Caco-2 (cell line): ENCODE measurements at regions of chr10 and their contacts with region 1.

Region 1: DNA sequence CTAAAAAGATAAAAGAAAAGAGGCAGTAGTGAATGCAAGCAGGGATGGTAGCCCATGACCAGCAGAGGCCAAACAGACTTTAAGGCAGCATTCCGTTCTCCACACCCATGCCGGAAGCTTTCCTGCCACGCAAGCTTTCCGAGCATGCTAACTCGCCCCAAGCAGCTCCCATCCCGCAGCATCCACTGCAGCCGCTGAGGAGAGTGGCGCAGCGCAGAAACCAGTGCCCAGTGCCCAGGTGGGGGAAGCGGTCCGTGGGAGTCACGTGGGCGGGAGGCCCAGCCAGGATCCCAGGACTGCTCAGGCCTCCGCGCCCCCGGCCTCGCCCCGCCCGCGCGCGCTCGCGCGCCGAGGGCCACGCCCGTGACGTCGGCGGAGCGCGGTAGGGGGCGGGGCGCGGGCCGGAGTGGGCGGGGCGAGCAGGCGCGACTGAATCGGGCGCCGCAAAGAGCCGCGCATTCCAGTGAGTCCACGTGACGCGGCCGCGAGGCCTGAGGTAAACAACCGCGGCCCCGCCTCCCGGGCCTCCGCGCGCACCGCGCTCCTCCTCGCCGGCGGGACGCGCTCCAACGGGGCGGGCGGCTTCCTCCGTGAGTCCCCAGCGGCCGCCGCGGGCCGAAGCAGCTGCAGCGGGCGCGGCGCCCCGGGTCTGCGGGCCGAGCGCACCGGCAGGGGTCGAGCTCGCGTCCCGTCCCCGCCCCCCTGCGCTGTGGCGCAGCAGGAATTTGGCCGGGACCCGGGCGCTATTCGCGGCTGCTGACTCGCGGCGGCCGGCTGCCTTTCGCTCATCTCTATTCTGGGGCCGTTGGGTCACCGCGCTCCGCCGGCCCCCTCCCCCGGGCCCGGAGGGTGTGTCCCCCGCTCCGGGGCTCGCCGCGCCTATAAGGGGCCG is at the start of gene OTUD1:
- DNase-seq: peak; percentile 93 to 98
- H3K4me3 ChIP-seq: peak within 1 kb of the TSS; percentile 83
- H3K4me3 Mint-ChIP-seq: peak within 1 kb of the TSS; percentile 81
- H3K27ac Mint-ChIP-seq: peak within 1 kb of the TSS; percentile 78
- H3K4me1 ChIP-seq: peaks cover 7% of the 10 kb centered on the region; the same call in 1 of the 2 replicates
- H3K4me1 Mint-ChIP-seq: peaks cover 8% of the 10 kb centered on the region
- H3K27me3 ChIP-seq: no peaks in the 10 kb centered on the region
- H3K27me3 Mint-ChIP-seq: peaks cover 2% of the 10 kb centered on the region
- CTCF ChIP-seq: no peak
- total RNA-seq, gene OTUD1: 9.2 and 10.7 TPM in 2 replicates

Region 2: DNA sequence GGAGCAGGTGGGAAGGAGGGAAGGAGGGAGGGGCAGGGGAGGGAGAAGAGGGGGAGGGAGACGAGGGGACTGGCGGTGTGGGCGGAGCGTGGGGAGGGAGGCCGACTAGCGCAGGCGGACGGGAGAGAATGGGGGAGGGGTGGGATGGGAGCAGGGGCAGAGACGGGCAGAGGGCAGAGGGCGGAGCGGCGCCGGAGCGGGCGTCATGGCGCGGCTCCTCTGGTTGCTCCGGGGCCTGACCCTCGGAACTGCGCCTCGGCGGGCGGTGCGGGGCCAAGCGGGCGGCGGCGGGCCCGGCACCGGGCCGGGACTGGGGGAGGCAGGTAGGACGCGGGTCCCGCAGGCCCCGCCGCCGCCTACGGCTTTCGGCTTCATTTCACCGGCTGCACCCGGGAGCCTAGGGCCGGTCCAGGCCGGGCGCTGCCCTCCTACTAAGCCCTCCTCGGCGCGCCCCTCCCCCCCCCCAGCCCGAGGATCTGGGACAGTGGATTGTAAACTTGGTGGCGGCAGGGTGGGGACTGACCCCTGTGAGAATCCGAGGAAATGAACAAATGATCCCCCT is 343.3 kb before region 1 on chr10 and contains the start of gene MSRB2:
- CTCF ChIA-PET with region 1: no interaction called
- POLR2A ChIA-PET with region 1: no interaction called
- intact Hi-C with region 1: loop called (anchors 5 kb)
- DNase-seq: peak; percentile 90 to 98
- H3K4me3 ChIP-seq: peak within 1 kb of the TSS; percentile 78
- H3K4me3 Mint-ChIP-seq: peak within 1 kb of the TSS; percentile 94
- H3K27ac Mint-ChIP-seq: peak within 1 kb of the TSS; percentile 83
- H3K4me1 ChIP-seq: peaks cover 31% of the 10 kb centered on the region
- H3K4me1 Mint-ChIP-seq: peaks cover 23% of the 10 kb centered on the region
- H3K27me3 ChIP-seq: no peaks in the 10 kb centered on the region
- H3K27me3 Mint-ChIP-seq: no peaks in the 10 kb centered on the region
- CTCF ChIP-seq: peak in 1 of 2 experiments; percentile 8
- total RNA-seq, gene MSRB2: 11.9 and 13.7 TPM in 2 replicates

Region 3: DNA sequence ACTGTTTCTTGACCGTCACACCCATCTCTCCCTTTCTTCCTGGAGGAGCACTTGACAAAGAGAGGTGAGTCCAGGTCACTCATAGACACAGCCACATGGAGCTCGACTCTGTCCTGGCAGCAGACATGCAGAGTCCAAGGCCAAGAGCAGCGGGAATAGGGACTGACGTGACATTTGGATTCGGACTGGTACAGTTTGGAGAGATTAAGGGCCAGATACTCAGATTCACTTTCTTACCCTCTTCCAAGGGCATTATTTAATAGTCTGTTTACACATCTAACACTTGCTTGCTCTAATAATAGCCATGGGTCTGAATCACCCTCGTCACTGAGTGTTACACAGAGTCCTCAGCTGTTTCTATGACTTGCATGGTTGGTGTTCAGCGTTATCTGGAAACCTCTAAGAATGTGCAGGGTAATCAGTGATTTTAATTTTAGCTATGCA is 39.1 kb before region 1 on chr10:
- CTCF ChIA-PET with region 1: no interaction called
- POLR2A ChIA-PET with region 1: no interaction called
- intact Hi-C with region 1: no loop called
- DNase-seq: no peak
- H3K4me3 ChIP-seq: no peak overlapping the region
- H3K4me3 Mint-ChIP-seq: peak overlapping the region; percentile 2
- H3K27ac Mint-ChIP-seq: no peak overlapping the region
- H3K4me1 ChIP-seq: peaks cover 3% of the 10 kb centered on the region; the same call in 1 of the 2 replicates
- H3K4me1 Mint-ChIP-seq: peaks cover 7% of the 10 kb centered on the region
- H3K27me3 ChIP-seq: no peaks in the 10 kb centered on the region
- H3K27me3 Mint-ChIP-seq: peaks cover under 1% of the 10 kb centered on the region
- CTCF ChIP-seq: no peak

Region 4: GRCh38 chr10:23417244-23417643 is 21.6 kb before region 1 on chr10:
- CTCF ChIA-PET with region 1: interaction called, 4 read pairs
- POLR2A ChIA-PET with region 1: no interaction called
- intact Hi-C with region 1: loop called (anchors 2 kb)
- DNase-seq: no peak
- H3K4me3 ChIP-seq: no peak overlapping the region
- H3K4me3 Mint-ChIP-seq: no peak overlapping the region
- H3K27ac Mint-ChIP-seq: no peak overlapping the region
- H3K4me1 ChIP-seq: peaks cover 5% of the 10 kb centered on the region; the same call in 1 of the 2 replicates
- H3K4me1 Mint-ChIP-seq: peaks cover 6% of the 10 kb centered on the region
- H3K27me3 ChIP-seq: no peaks in the 10 kb centered on the region
- H3K27me3 Mint-ChIP-seq: peaks cover 9% of the 10 kb centered on the region
- CTCF ChIP-seq: no peak

Region 5: GRCh38 chr10:23493711-23494110 is 54.9 kb after region 1 on chr10:
- CTCF ChIA-PET with region 1: no interaction called
- POLR2A ChIA-PET with region 1: no interaction called
- intact Hi-C with region 1: no loop called
- DNase-seq: no peak
- H3K4me3 ChIP-seq: no peak overlapping the region
- H3K4me3 Mint-ChIP-seq: no peak overlapping the region
- H3K27ac Mint-ChIP-seq: no peak overlapping the region
- H3K4me1 ChIP-seq: no peaks in the 10 kb centered on the region
- H3K4me1 Mint-ChIP-seq: no peaks in the 10 kb centered on the region
- H3K27me3 ChIP-seq: no peaks in the 10 kb centered on the region
- H3K27me3 Mint-ChIP-seq: peaks cover 38% of the 10 kb centered on the region
- CTCF ChIP-seq: no peak

Region 6: GRCh38 chr10:23664024-23664423 is 225.2 kb after region 1 on chr10:
- CTCF ChIA-PET with region 1: no interaction called
- POLR2A ChIA-PET with region 1: no interaction called
- intact Hi-C with region 1: no loop called
- DNase-seq: no peak
- H3K4me3 ChIP-seq: no peak overlapping the region
- H3K4me3 Mint-ChIP-seq: no peak overlapping the region
- H3K27ac Mint-ChIP-seq: no peak overlapping the region
- H3K4me1 ChIP-seq: no peaks in the 10 kb centered on the region
- H3K4me1 Mint-ChIP-seq: no peaks in the 10 kb centered on the region
- H3K27me3 ChIP-seq: no peaks in the 10 kb centered on the region
- H3K27me3 Mint-ChIP-seq: peaks cover 3% of the 10 kb centered on the region
- CTCF ChIP-seq: no peak